ENCODE measurements at regions of chr16 and their contacts with region 1.

Region 1: GRCh38 chr16:56332464-56333079 is 92.8 kb downstream of the AMFR start:
- DNase-seq: no peak
- H3K4me3 ChIP-seq: no peak overlapping the region
- H3K27me3 ChIP-seq: no peaks in the 10 kb centered on the region
- CTCF ChIP-seq: peak; percentile 63

Region 2: GRCh38 chr16:56343661-56344526 is 11.3 kb after region 1 on chr16:
- CTCF ChIA-PET with region 1: interaction called, 11 read pairs
- POLR2A ChIA-PET with region 1: no interaction called
- DNase-seq: no peak
- H3K4me3 ChIP-seq: no peak overlapping the region
- H3K27me3 ChIP-seq: no peaks in the 10 kb centered on the region
- CTCF ChIP-seq: no peak